ENCODE measurements at regions of chr12 and their contacts with region 1.

Region 1: GRCh38 chr12:123043536-123044001 is 63.1 kb downstream of the ARL6IP4 start:
- DNase-seq: peak; percentile 92
- ATAC-seq: peak; percentile 100
- H3K4me3 ChIP-seq: no peak overlapping the region
- H3K27ac ChIP-seq: 0 out of 2 replicates have a peak overlapping the region, but pooled peaks have one; percentile 7
- H3K4me1 ChIP-seq: peaks cover 7% of the 10 kb centered on the region
- H3K27me3 ChIP-seq: no peaks in the 10 kb centered on the region
- CTCF ChIP-seq: peak; percentile 94

Region 2: DNA sequence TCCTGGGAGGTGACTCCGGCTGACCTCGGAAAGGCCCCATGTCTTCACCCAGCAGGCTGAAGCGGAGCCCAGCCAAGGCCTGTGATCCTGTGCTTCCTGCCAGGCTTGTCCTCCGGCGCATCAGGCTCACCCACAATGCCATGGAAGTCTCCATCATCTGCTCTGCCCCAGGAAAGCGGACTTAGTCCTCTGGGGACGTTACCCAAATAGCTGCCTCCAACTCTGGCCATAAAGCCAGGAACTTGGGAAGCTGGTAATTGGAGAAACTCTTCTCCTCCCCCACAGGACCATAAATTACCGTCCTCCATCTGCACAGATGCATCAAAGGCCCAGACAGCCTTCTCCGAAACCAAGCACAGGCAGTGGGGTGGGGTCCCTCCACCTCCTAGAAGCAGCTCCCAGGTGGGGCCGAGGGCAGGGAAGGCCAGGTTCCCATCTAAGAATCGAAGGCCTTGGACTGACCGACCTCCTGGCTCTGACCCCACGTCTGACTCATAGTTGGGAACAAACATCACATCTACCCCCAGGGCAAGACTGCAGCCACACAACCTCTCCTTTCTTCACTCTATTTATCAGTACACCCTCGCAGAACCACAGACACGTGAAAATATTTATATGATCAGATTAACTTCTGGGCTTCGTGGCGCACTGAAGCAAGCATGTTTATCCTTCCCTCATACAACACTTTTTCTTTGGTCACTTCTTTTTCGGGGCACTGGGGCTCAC is 50.9 kb after region 1 on chr12:
- CTCF ChIA-PET with region 1: interaction called, 4 read pairs
- POLR2A ChIA-PET with region 1: no interaction called
- intact Hi-C with region 1: loop called (anchors 2 kb)
- DNase-seq: peak; percentile 96
- ATAC-seq: peak; percentile 69
- H3K4me3 ChIP-seq: peak overlapping the region; percentile 24; the same call in 1 of the 2 replicates
- H3K27ac ChIP-seq: peak overlapping the region; percentile 69
- H3K4me1 ChIP-seq: peaks cover 52% of the 10 kb centered on the region
- H3K27me3 ChIP-seq: no peaks in the 10 kb centered on the region
- CTCF ChIP-seq: no peak

Region 3: GRCh38 chr12:123126186-123127006 is 82.8 kb after region 1 on chr12:
- CTCF ChIA-PET with region 1: interaction called, 3 read pairs
- POLR2A ChIA-PET with region 1: no interaction called
- intact Hi-C with region 1: loop called (anchors 1 kb)
- DNase-seq: peak; percentile 97
- ATAC-seq: peak; percentile 99
- H3K4me3 ChIP-seq: peak overlapping the region; percentile 49; the same call in 1 of the 2 replicates
- H3K27ac ChIP-seq: peak overlapping the region; percentile 84
- H3K4me1 ChIP-seq: peaks cover 18% of the 10 kb centered on the region
- H3K27me3 ChIP-seq: no peaks in the 10 kb centered on the region
- CTCF ChIP-seq: peak; percentile 50

Region 4: DNA sequence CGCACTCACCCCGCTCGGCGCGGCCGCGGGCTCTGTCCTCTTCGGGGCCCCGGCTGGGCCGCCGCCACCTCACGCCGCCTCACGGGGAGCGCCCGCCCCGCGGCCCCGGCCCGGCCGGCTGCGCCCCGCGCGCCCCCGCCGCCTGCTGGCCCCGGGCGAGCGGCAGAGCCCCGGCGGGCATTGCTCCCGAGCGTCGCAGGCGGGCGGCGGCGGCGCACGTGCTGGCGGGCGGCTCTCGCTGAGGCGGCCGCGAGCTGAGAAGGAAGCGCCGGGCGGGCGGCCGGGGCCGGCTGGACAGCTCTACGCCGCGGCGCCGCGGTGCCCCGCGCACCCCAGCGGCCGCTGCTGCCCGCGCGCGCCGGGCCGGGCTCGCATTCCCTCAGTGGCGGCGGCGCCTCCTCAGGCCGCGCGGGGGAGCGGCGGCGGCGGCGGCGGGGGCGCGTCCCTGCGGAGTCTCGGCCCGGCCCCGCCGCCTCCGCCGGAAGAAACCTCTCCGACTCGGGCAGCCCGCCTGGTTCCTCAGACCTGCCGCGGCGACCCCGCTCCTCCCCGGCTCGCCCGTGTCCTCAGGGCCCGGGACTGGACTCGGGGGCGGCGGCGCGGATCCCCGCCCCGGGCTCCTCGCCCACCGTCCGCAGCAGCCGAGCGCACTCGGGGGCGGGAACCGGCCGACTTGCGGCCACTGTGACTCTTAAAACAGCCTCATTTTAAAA is 107.3 kb after region 1 on chr12 and contains the start of gene PITPNM2:
- CTCF ChIA-PET with region 1: interaction called, 10 read pairs
- POLR2A ChIA-PET with region 1: interaction called, 24 read pairs
- intact Hi-C with region 1: loop called (anchors 2 kb)
- DNase-seq: peak; percentile 69
- ATAC-seq: peak; percentile 84
- H3K4me3 ChIP-seq: peak within 1 kb of the TSS; percentile 80
- H3K27ac ChIP-seq: no peak within 1 kb of the TSS
- H3K4me1 ChIP-seq: peaks cover 17% of the 10 kb centered on the region
- H3K27me3 ChIP-seq: no peaks in the 10 kb centered on the region
- CTCF ChIP-seq: no peak
- total RNA-seq, gene PITPNM2: 5.6 and 8.1 TPM in 2 replicates